ENCODE measurements at regions of chr10 and their contacts with region 1.

Region 1: DNA sequence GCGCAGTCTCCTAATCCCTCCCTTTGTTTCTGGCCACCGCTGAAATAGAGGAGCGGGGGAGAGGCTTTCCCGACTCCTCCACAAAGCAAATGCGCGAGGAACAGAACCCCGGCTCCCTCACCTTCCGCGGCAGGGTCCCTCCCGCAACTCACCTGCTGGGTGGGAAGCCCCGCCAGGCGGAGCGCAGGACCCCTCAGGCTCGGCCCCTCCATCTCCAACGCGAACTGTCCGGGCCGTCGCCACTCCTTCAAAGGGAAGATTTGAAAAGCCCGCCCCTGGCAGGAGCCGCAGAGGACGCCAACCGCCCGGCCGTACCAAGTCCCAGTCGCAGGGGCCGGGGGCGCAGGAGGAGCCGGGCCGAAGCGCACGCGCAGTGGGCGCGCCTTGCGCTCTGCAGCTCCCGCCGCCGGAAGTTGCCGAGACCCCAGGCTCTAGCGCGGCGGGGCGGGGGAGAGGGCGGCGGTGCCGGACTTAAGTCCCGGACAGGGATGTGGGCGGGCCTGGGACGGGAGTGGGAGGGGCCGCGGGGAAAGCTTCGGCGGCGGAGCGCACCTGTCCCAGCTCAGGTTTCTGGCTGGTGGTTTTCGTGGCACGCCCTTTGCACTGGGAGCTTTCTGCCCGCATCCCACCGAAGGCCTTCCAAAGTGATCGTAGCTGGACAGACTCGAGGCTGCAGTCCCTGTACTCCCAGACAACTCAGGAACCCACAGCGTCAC is at the start of gene RTKN2:
- DNase-seq: peak; percentile 94
- H3K4me3 Mint-ChIP-seq: peak within 1 kb of the TSS; percentile 86
- H3K27ac Mint-ChIP-seq: peak within 1 kb of the TSS; percentile 56
- H3K4me1 Mint-ChIP-seq: peaks cover 20% of the 10 kb centered on the region
- H3K27me3 Mint-ChIP-seq: peaks cover 34% of the 10 kb centered on the region
- total RNA-seq, gene RTKN2: 2.7 and 3.4 TPM in 2 replicates

Region 2: GRCh38 chr10:61896854-61897661 is 371.5 kb before region 1 on chr10:
- intact Hi-C with region 1: loop called (anchors 5 kb)
- DNase-seq: peak; percentile 91
- H3K4me3 Mint-ChIP-seq: peak overlapping the region; percentile 92
- H3K27ac Mint-ChIP-seq: peak overlapping the region; percentile 93
- H3K4me1 Mint-ChIP-seq: peaks cover 36% of the 10 kb centered on the region
- H3K27me3 Mint-ChIP-seq: no peaks in the 10 kb centered on the region

Region 3: DNA sequence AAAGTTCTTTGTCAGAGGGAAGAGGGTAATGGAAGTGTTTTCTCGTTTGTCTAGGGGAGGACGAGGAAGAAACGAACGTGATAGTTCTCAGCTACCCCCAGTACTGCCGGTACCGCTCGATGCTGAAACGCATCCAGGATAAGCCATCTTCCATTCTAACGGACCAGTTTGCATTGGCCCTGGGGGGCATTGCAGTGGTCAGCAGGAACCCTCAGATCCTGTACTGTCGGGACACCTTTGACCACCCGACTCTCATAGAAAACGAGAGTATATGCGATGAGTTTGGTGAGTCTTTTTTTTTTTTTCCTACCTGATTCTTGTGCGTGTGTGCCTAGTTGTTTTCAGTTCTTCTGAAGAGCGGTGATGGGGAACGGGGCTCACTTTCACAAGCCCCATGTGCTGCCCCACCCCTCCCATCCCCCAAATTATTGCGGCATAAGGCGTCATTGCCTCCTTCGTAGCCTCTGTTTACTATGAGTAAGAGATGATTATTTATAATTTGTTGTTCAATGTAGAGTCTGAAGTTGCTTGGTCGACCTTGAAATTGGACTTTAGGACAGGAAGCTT is 268.4 kb before region 1 on chr10:
- intact Hi-C with region 1: no loop called
- DNase-seq: no peak
- H3K4me3 Mint-ChIP-seq: no peak overlapping the region
- H3K27ac Mint-ChIP-seq: peak overlapping the region; percentile 65
- H3K4me1 Mint-ChIP-seq: peaks cover 61% of the 10 kb centered on the region
- H3K27me3 Mint-ChIP-seq: no peaks in the 10 kb centered on the region

Region 4: GRCh38 chr10:62250594-62251198 is 17.9 kb before region 1 on chr10:
- intact Hi-C with region 1: loop called (anchors 2 kb)
- DNase-seq: no peak
- H3K4me3 Mint-ChIP-seq: no peak overlapping the region
- H3K27ac Mint-ChIP-seq: no peak overlapping the region
- H3K4me1 Mint-ChIP-seq: peaks cover 24% of the 10 kb centered on the region
- H3K27me3 Mint-ChIP-seq: no peaks in the 10 kb centered on the region

Region 5: DNA sequence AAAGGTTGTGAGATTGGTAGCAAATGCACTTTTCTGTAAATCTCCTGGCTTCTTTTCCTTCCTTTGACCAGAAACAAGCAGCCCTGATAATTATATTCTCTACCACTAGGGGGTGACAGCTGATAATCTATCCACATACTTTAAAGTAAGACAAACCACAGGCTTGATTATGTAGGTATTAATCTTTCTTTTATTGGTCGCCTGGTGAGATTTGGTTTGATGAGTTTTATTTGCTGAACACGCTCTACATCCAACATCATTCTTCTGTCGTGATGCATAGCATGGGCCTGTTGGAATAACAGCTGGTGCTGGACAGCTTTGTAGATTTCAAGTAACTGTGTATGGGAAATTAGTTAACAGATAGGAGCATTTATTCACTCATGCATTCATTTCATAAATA is 169.1 kb after region 1 on chr10:
- intact Hi-C with region 1: loop called (anchors 5 kb)
- DNase-seq: peak; percentile 79
- H3K4me3 Mint-ChIP-seq: no peak overlapping the region
- H3K27ac Mint-ChIP-seq: no peak overlapping the region
- H3K4me1 Mint-ChIP-seq: peaks cover 10% of the 10 kb centered on the region
- H3K27me3 Mint-ChIP-seq: peaks cover 30% of the 10 kb centered on the region

Region 6: DNA sequence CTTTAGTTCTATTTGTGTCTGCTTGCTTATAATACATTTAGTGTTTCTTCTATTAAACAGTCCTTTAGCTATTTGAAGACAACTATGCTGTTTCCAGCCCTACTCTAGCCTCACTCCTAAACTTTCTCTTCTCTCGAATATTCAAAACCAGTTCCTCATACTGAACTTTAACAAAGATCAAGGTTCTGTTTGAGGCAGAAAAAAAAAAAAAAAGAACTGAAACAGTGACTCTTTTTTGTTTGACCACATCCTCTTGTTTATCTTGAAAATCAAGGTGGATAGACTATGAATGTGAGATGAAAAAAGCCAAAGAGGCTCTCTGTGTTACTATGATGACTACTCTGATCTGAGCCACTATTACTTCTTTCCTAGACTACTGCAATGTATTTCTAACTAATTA is 259.9 kb after region 1 on chr10:
- intact Hi-C with region 1: loop called (anchors 5 kb)
- DNase-seq: peak; percentile 65
- H3K4me3 Mint-ChIP-seq: peak overlapping the region; percentile 27
- H3K27ac Mint-ChIP-seq: peak overlapping the region; percentile 39
- H3K4me1 Mint-ChIP-seq: peaks cover 33% of the 10 kb centered on the region
- H3K27me3 Mint-ChIP-seq: peaks cover 11% of the 10 kb centered on the region

Region 7: GRCh38 chr10:62851442-62851841 is 582.9 kb after region 1 on chr10:
- intact Hi-C with region 1: loop called (anchors 10 kb)
- DNase-seq: peak; percentile 68
- H3K4me3 Mint-ChIP-seq: no peak overlapping the region
- H3K27ac Mint-ChIP-seq: peak overlapping the region; percentile 3
- H3K4me1 Mint-ChIP-seq: peaks cover 52% of the 10 kb centered on the region
- H3K27me3 Mint-ChIP-seq: no peaks in the 10 kb centered on the region

Measured in activated CD4-positive, alpha-beta T cell treated with anti-CD3 and anti-CD28 coated beads, Interleukin-2, amount 10 ng/mL, durations not matched to agents 24 days and 14 days (primary cell).